ENCODE measurements at regions of chr6 and their contacts with region 1.

Region 1: DNA sequence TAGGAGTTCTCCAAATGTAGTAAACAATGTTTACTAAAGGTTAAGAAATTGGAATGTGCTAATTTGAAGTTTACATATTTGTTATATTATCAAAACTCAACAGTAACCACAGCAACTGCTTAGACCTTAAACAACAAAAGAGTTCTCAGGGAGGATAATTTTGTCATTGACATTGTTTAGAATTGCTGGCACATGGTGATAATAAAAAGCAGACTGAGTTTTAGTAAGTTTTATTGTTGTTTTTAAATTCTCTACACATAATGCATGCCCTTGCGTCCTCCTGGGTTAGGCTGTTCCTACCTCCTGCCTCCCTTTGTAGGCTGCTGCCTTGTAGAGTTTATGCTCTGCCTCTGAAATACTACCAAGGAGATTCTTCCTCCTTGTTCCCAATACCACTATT is 28.7 kb downstream of the LAMA4 start:
- DNase-seq: no peak
- ATAC-seq: no peak
- H3K4me3 ChIP-seq: no peak overlapping the region
- H3K27ac ChIP-seq: peak overlapping the region in 7 of 12 donors; percentile 5 to 87 (median 25)
- H3K4me1 ChIP-seq: peaks cover 8 to 82% (median 69%) of the 10 kb centered on the region in 12 donors
- H3K27me3 ChIP-seq: no peaks in the 10 kb centered on the region
- CTCF ChIP-seq: no peak
- POLR2A ChIP-seq: no peak

Region 2: DNA sequence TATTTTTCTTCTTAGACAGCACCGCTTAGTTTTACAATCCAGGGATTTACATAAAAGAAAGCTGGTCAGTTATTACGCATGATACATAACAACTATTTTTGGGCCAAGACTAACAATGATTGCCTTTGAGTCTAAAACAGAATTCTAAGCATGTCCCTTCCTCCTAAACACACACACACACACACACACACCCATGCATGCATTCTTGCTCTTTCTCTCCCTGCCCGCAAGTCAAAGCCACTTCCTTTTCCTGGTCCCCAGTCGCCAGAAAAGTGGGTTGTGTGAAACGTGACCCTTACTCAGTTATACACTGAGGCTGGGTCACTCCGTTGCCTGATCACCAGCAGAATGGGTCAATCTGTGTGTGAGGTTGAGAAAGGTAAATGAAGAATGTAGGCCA is 383.9 kb before region 1 on chr6:
- intact Hi-C with region 1: loop called in 1 of 10 experiments (anchors 5 kb)
- DNase-seq: peak in 3 of 5 donors; percentile 43 to 46 (median 44)
- ATAC-seq: peak in 2 of 4 donors; percentile 28 to 29
- H3K4me3 ChIP-seq: no peak overlapping the region
- H3K27ac ChIP-seq: peak overlapping the region in 7 of 12 donors; percentile 4 to 84 (median 52)
- H3K4me1 ChIP-seq: peaks cover 10 to 93% (median 62%) of the 10 kb centered on the region in 12 donors
- H3K27me3 ChIP-seq: no peaks in the 10 kb centered on the region
- CTCF ChIP-seq: no peak
- POLR2A ChIP-seq: no peak

Measured in heart left ventricle (tissue), 16 donors.